ENCODE measurements at regions of chr1 and their contacts with region 1.

Region 1: DNA sequence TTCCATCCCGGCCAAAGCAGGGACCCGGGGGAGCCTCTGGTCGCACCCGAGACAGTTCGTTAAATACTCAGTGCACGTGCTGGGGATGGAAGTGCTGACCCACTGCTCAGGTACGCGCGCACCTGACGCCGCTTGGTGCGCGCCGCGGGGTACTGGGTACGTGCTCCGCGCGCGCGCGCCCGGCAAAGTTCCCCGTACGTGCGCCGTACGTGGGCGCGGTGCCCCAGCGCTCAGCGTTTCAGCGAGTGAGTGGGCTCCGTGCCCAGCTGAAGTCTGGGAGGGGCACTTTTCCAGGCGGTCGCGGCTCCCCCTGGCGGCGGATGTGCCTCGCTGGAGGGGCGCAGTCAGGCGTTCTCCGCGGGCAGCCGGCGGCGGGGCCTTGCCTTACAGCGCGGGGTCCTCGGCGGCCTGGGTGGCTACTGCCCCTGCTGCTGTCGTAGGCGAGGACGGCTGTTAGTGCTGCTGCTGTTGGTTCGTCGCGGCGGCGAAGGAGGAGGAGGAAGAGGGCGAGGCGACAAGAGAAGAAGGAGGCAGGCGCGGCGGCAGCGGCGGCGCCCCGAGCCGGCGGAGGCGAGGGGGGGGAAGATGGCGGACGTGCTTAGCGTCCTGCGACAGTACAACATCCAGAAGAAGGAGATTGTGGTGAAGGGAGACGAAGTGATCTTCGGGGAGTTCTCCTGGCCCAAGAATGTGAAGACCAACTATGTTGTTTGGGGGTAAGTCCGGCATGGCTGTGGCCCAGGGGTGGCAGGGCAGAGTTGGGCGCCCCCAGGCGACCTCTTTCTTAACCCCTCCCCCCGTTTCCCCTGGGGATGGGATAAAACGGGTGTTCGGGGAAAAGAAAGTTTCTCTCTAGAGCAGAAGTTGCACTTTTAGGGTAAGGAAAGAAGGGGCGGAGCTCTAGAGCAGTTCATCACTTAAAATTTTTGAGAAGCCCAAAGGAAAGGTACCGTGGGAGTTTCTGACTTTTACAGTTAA is at the start of gene CDC73:
- DNase-seq: peak; percentile 97 to 99 (median 98)
- ATAC-seq: peak; percentile 98 to 100 (median 98)
- H3K4me3 ChIP-seq: peak within 1 kb of the TSS; percentile 60 to 89 (median 78)
- H3K27ac ChIP-seq: peak within 1 kb of the TSS; percentile 88 to 99 (median 95)
- H3K4me1 ChIP-seq: peaks cover 4 to 41% (median 21%) of the 10 kb centered on the region in 12 donors
- H3K27me3 ChIP-seq: no peaks in the 10 kb centered on the region
- CTCF ChIP-seq: peak; percentile 84 to 99 (median 92)
- POLR2A ChIP-seq: peak in 1 of 2 donors; percentile 85
- total RNA-seq, gene CDC73: 26.6 to 57.3 (median 53.6) TPM

Region 2: GRCh38 chr1:193104906-193105820 is 16.7 kb before region 1 on chr1 and contains the start of gene GLRX2:
- intact Hi-C with region 1: loop called in 8 of 10 experiments (anchors 1 to 2 kb)
- DNase-seq: peak; percentile 87 to 94 (median 90)
- ATAC-seq: peak; percentile 93 to 99 (median 98)
- H3K4me3 ChIP-seq: peak within 1 kb of the TSS; percentile 78 to 96 (median 88)
- H3K27ac ChIP-seq: peak within 1 kb of the TSS; percentile 70 to 99 (median 92)
- H3K4me1 ChIP-seq: peaks cover 3 to 25% (median 13%) of the 10 kb centered on the region in 12 donors
- H3K27me3 ChIP-seq: no peaks in the 10 kb centered on the region
- CTCF ChIP-seq: peak in 5 of 12 donors; percentile 5 to 28 (median 18)
- POLR2A ChIP-seq: peak in 1 of 2 donors; percentile 86
- total RNA-seq, gene GLRX2: 11.0 to 102 (median 28.5) TPM

Measured in heart left ventricle (tissue), 16 donors.